H1 (cell line): ENCODE measurements at regions of chr14 and their contacts with region 1.

Region 1: DNA sequence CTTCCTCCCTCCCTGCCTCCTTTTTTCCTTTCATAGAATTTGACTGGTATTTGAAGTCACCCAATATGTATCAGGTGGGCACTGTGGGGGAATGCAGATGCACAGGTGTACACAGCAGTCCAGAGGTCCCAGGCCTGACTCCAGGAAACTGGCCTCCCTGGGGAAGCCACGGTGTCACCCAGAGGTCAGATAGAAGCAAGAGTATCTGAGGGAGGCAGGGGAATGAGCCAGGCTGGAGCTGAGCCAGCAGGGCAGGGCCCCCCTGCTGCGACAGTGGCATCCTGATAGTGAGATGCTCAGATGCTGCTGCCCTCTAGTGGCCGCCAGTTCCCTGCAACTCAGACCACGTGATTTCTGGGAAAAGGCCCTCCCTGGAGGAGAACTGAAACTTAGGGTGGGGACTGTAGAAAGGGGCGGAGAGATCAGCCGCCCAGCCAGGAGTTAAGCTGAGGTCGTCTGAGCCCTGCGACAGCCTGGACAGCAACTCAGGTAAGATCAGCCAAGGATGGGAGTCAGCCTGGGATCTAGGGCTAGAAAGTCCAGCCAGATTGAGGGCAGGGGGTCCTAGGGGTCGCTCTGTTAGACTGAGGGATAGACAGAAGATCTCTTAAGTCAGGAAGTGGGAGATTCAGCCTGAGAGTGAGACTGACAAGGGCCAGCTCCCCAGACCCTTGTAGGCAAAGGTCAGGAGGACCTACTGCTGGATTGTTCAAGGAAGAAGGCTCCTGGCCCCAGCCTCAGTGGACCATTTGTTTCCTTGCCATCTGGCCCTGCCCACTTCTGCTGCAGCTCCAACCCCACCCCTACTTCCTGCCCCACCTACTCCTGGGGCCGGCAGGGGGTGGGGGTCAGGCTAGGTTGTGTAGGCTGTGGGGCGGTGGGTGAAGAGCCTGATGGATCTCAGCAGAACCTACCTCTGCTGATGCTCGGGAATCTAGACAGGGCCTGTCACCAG is at the start of gene IRF9:
- DNase-seq: peak; percentile 94 to 100
- H3K4me3 ChIP-seq: peak within 1 kb of the TSS; percentile 6 to 52 (median 20); a peak in 5 of 8 replicates
- H3K27ac ChIP-seq: peak within 1 kb of the TSS; percentile 55; the same call in 1 of the 2 replicates
- H3K4me1 ChIP-seq: peaks cover 0 to 10% (median 2%) of the 10 kb centered on the region in 4 experiments; a peak in 3 of 7 replicates
- H3K27me3 ChIP-seq: no peaks in the 10 kb centered on the region
- CTCF ChIP-seq: peak; percentile 85 to 97 (median 95)
- EP300 ChIP-seq: 0 out of 3 replicates have a peak, but pooled peaks of 1 of the 2 experiments have one; percentile 68
- POLR2A ChIP-seq: peak in 1 of 2 experiments; percentile 48; a peak in 1 of 3 replicates
- RAD21 ChIP-seq: peak; percentile 73 to 78
- total RNA-seq, gene IRF9: 11.1 and 11.4 TPM in 2 replicates

Region 2: GRCh38 chr14:24093901-24094761 is 67.0 kb before region 1 on chr14 and contains the start of gene PCK2:
- CTCF ChIA-PET with region 1: interaction called, 4 read pairs
- POLR2A ChIA-PET with region 1: interaction called, 21 read pairs
- DNase-seq: peak; percentile 93 to 95
- H3K4me3 ChIP-seq: peak within 1 kb of the TSS; percentile 60 to 96 (median 84)
- H3K27ac ChIP-seq: peak within 1 kb of the TSS; percentile 89
- H3K4me1 ChIP-seq: peaks cover 5 to 13% (median 9%) of the 10 kb centered on the region in 4 experiments
- H3K27me3 ChIP-seq: no peaks in the 10 kb centered on the region
- CTCF ChIP-seq: no peak
- EP300 ChIP-seq: peak in 1 of 2 experiments; percentile 80; a peak in 1 of 3 replicates
- POLR2A ChIP-seq: peak; percentile 87 to 97
- RAD21 ChIP-seq: no peak
- total RNA-seq, gene PCK2: 79.3 and 81.9 TPM in 2 replicates

Region 3: GRCh38 chr14:24114536-24115450 is 46.3 kb before region 1 on chr14 and contains the starts of genes DCAF11 and NRL:
- CTCF ChIA-PET with region 1: interaction called, 15 read pairs
- POLR2A ChIA-PET with region 1: interaction called, 11 read pairs
- DNase-seq: peak; percentile 96 to 99
- H3K4me3 ChIP-seq: peak within 1 kb of the TSS; percentile 68 to 89 (median 76)
- H3K27ac ChIP-seq: peak within 1 kb of the TSS; percentile 97
- H3K4me1 ChIP-seq: peaks cover 0 to 4% (median 2%) of the 10 kb centered on the region in 4 experiments; a peak in 5 of 7 replicates
- H3K27me3 ChIP-seq: no peaks in the 10 kb centered on the region
- CTCF ChIP-seq: no peak
- EP300 ChIP-seq: no peak
- POLR2A ChIP-seq: peak; percentile 45 to 75
- RAD21 ChIP-seq: no peak
- total RNA-seq, gene DCAF11: 63.6 and 67.2 TPM in 2 replicates
- total RNA-seq, gene NRL: 1.1 TPM in 2 replicates

Region 4: GRCh38 chr14:24141097-24141880 is 19.8 kb before region 1 on chr14 and contains the start of gene EMC9:
- CTCF ChIA-PET with region 1: interaction called, 24 read pairs
- POLR2A ChIA-PET with region 1: interaction called, 86 read pairs
- DNase-seq: peak; percentile 98 to 100
- H3K4me3 ChIP-seq: peak within 1 kb of the TSS; percentile 79 to 99 (median 94)
- H3K27ac ChIP-seq: peak within 1 kb of the TSS; percentile 92
- H3K4me1 ChIP-seq: peaks cover 4 to 13% (median 7%) of the 10 kb centered on the region in 4 experiments; a peak in 6 of 7 replicates
- H3K27me3 ChIP-seq: no peaks in the 10 kb centered on the region
- CTCF ChIP-seq: peak; percentile 23 to 48 (median 26); a peak in 3 of 4 replicates
- EP300 ChIP-seq: no peak
- POLR2A ChIP-seq: peak; percentile 81 to 84
- RAD21 ChIP-seq: no peak
- total RNA-seq, gene EMC9: 36.9 and 38.4 TPM in 2 replicates

Region 5: GRCh38 chr14:24179961-24180796 is 19.1 kb after region 1 on chr14:
- CTCF ChIA-PET with region 1: interaction called, 8 read pairs
- POLR2A ChIA-PET with region 1: interaction called, 93 read pairs
- DNase-seq: no peak
- H3K4me3 ChIP-seq: no peak overlapping the region
- H3K27ac ChIP-seq: no peak overlapping the region
- H3K4me1 ChIP-seq: no peaks in the 10 kb centered on the region
- H3K27me3 ChIP-seq: no peaks in the 10 kb centered on the region
- CTCF ChIP-seq: no peak
- EP300 ChIP-seq: no peak
- POLR2A ChIP-seq: no peak
- RAD21 ChIP-seq: no peak

Region 6: DNA sequence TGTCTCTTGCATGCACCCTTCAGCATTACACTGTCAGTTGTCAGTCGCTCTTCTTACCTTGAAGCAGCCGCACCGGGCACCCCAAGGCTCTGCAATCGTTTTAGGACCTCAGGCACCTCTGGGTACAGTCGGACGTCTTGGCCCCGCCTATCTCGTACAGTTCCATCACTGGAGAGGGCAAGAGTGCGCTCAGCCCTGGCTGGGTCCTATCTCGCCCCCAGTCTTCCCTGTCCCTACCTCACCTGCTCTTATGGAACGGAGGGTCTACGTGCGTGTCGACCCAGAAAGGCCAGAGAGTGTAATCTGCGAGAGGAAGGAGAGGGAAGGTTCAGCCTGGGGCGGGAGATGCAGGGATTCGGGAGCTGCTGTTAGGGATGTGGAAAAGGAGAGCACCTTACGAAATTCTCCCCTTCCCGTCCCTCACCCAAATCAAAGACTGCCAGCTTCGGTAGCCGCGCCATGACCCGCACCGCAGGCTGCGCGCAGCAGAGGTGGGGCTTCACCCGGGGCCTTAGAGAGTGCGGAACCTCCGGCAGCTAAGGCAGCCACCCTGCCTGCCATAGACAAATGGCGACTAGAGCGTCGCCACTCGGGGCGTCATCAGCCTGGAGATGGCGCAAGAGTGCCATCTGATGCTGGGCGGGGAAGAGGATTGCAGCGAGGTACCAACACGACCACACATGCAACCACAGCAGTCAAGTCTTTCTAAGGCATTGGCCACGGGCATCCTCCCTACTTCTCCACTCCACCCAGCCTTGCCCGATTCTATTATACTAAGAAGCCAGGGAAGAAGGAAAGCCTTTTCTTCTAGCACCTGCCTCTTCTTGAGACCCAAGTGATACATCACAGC is 54.6 kb after region 1 on chr14 and contains the start of gene MDP1:
- CTCF ChIA-PET with region 1: interaction called, 4 read pairs
- POLR2A ChIA-PET with region 1: interaction called, 12 read pairs
- DNase-seq: peak; percentile 73 to 82
- H3K4me3 ChIP-seq: peak within 1 kb of the TSS; percentile 77 to 94 (median 84)
- H3K27ac ChIP-seq: peak within 1 kb of the TSS; percentile 72
- H3K4me1 ChIP-seq: peaks cover 0 to 5% (median 2%) of the 10 kb centered on the region in 4 experiments; a peak in 1 of 7 replicates
- H3K27me3 ChIP-seq: no peaks in the 10 kb centered on the region
- CTCF ChIP-seq: peak; percentile 77 to 95 (median 92)
- EP300 ChIP-seq: no peak
- POLR2A ChIP-seq: peak; percentile 87 to 95
- RAD21 ChIP-seq: peak; percentile 65 to 73
- total RNA-seq, gene MDP1: 14.3 and 17.7 TPM in 2 replicates